AG04450 (cell line): ENCODE measurements at regions of chr2 and their contacts with region 1.

Region 1: DNA sequence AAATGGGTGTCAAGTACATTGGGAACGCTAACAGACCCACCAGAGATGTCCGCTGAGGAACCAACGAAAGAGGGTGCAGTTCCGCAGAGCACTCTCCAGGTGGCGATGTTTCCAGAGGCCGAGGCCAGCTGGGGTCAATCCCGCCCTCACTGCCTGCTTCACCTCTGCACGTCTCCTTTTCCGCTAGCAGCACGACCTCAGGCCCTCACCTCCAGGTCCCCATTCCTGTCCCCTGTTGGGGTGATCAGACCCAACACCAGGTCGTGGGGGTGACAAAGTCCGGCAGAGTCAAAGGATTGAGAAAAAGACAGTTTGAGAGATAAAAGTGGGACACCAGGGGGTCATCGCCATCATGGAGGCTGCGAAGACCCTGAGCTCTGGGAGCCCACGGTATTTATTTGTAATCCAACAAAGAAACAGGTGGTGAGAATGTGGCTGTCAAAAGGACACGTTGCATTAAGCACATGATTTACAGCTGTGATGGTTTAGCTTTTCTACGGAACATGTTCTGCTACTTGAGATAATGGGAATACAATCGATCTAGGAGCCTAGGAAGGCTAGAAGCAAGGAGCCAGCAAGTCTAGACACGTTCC is 27.3 kb downstream of the ZAP70 start:
- DNase-seq: no peak
- H3K4me3 ChIP-seq: no peak overlapping the region
- H3K27ac ChIP-seq: no peak overlapping the region
- H3K27me3 ChIP-seq: peaks cover 2% of the 10 kb centered on the region
- CTCF ChIP-seq: peak; percentile 80

Region 2: GRCh38 chr2:97730245-97730644 is 10.4 kb before region 1 on chr2:
- CTCF ChIA-PET with region 1: interaction called, 15 read pairs
- POLR2A ChIA-PET with region 1: interaction called, 5 read pairs
- DNase-seq: no peak
- H3K4me3 ChIP-seq: no peak overlapping the region
- H3K27ac ChIP-seq: no peak overlapping the region
- H3K27me3 ChIP-seq: peaks cover 5% of the 10 kb centered on the region
- CTCF ChIP-seq: no peak